ENCODE measurements at regions of chr19 and their contacts with region 1.

Region 1: DNA sequence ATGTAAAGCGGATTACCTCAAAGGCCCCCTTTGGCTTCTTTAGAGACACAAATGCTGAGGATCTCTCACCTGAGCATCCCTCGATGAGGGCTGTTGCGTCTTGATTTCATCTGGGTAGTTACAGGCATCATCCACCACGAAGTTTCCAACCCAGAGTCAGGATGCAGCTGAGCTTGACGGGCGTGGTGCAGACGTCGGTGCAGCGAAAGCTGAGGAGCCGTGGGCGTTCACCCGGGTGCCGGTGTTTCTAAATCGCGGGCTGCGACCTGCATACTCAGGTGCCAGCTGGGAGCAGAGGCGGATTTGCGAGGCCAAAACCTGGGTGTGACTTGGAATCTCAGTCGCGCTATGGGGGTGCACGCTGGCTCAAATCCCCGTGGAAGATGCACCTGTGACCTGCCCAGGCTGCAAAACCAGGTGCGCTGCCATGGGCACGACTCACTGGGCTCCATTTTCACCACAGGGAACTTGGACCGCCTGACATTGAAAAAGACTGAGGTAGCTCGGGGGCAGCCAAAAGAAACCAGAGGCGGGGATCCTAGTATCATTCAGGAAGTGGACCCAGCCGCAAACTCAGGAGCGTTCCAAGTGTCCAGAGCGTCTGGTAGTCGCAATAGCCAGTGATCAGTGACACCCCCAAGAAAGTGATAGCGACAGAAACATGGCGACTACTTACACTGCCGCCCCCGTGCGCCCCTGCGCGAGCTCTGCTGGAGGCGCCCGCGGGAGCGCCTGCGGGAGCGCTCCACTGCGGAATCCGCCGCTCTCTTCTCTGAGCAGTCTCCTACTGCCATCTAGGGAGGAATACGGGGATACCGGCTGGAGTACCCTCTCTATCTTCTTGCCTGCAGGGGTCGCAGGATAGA is 36.4 kb upstream of the IGFL4 start:
- DNase-seq: peak; percentile 69
- H3K4me3 ChIP-seq: peak overlapping the region; percentile 38 to 52 (median 51)
- H3K27ac ChIP-seq: no peak overlapping the region
- H3K4me1 ChIP-seq: peaks cover 27% of the 10 kb centered on the region
- H3K27me3 ChIP-seq: no peaks in the 10 kb centered on the region
- CTCF ChIP-seq: peak; percentile 100

Region 2: DNA sequence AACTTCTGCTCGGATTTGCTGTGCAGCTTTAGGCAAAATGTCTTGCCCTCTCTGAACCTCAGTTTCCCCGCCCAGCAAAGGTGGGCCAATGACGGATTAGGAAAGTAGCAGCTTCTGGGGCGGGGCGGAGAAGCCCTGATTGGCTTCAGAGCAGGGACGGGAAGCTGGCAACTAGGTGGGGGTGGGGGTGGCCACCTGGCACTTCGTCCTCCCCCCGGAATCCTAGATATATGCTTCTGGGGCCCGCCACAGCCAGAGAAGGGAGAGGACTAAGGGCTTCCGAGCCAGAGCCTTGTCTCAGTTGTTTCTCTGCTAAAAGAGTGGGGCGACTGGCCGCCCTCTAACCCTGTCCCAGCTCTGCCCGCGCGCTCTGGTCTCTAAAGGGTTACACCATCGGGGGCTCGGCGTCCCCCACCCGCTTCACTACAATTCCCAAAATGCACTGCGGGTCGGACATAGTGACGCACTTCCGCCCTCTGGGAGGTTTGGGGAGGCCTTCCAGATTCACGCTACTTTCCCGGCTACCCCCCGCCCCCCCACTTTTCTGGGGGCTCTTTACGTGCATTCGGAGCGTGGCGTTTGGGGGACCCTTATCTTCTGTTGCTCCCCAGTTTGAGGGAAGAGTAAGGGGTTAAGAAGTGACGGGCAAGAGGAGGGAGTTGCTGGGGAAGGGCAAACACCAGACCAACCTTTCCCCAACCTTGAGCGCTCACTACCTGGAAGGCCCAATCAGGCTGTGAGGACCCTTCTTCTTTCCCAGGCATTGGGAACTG is 190.6 kb before region 1 on chr19:
- CTCF ChIA-PET with region 1: no interaction called
- dilution Hi-C with region 1: no loop called
- in situ Hi-C with region 1: no loop called
- intact Hi-C with region 1: loop called (anchors 10 kb)
- DNase-seq: peak; percentile 95
- H3K4me3 ChIP-seq: peak overlapping the region; percentile 54 to 74 (median 61)
- H3K27ac ChIP-seq: peak overlapping the region; percentile 73
- H3K4me1 ChIP-seq: peaks cover 32% of the 10 kb centered on the region
- H3K27me3 ChIP-seq: no peaks in the 10 kb centered on the region
- CTCF ChIP-seq: no peak

Region 3: DNA sequence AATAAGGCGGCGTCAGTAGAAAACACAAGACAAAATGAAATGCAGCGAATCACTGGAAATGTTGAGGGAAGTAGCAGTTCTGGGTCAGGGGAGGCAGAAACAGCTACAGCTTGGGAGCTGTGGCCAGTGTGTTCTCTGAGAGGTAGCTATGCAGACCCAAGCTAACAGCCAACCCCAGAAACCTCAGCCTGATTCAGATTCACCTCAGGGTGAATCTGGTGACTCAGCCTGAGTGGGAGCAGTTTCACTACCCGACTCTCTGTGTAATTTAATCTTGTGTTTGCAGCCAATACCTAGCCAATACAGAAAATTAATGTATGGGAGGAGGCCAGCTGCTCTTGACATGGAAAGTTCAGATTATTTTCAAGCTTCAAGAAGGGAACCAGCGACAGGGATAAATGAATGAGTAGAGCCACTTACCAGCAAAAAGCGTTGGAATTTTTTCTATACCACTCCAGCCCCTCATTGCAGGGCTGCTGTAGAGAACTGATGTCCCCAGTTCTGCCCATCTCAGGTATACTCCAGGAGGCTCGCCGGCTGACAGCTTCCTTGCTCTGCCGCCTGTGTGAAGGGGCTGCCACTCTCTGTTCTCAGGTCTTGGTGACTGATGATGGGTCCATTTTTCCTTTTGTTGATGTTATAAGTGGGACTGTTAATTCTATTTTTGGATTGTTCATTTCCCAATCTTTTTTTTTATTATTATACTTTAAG is 38.4 kb after region 1 on chr19:
- CTCF ChIA-PET with region 1: no interaction called
- dilution Hi-C with region 1: no loop called
- in situ Hi-C with region 1: loop called in 1 of 2 experiments (anchors 5 kb)
- intact Hi-C with region 1: loop called (anchors 1 kb)
- DNase-seq: peak; percentile 97
- H3K4me3 ChIP-seq: peak overlapping the region in 2 of 3 experiments; percentile 4 to 15
- H3K27ac ChIP-seq: peak overlapping the region; percentile 97
- H3K4me1 ChIP-seq: peaks cover 45% of the 10 kb centered on the region
- H3K27me3 ChIP-seq: no peaks in the 10 kb centered on the region
- CTCF ChIP-seq: no peak

Region 4: GRCh38 chr19:46192992-46193650 is 115.9 kb after region 1 on chr19:
- CTCF ChIA-PET with region 1: interaction called, 18 read pairs
- dilution Hi-C with region 1: no loop called
- in situ Hi-C with region 1: loop called (anchors 5 kb)
- intact Hi-C with region 1: loop called (anchors 1 kb)
- DNase-seq: peak; percentile 86
- H3K4me3 ChIP-seq: no peak overlapping the region
- H3K27ac ChIP-seq: peak overlapping the region; percentile 51
- H3K4me1 ChIP-seq: peaks cover 43% of the 10 kb centered on the region
- H3K27me3 ChIP-seq: no peaks in the 10 kb centered on the region
- CTCF ChIP-seq: no peak

Region 5: DNA sequence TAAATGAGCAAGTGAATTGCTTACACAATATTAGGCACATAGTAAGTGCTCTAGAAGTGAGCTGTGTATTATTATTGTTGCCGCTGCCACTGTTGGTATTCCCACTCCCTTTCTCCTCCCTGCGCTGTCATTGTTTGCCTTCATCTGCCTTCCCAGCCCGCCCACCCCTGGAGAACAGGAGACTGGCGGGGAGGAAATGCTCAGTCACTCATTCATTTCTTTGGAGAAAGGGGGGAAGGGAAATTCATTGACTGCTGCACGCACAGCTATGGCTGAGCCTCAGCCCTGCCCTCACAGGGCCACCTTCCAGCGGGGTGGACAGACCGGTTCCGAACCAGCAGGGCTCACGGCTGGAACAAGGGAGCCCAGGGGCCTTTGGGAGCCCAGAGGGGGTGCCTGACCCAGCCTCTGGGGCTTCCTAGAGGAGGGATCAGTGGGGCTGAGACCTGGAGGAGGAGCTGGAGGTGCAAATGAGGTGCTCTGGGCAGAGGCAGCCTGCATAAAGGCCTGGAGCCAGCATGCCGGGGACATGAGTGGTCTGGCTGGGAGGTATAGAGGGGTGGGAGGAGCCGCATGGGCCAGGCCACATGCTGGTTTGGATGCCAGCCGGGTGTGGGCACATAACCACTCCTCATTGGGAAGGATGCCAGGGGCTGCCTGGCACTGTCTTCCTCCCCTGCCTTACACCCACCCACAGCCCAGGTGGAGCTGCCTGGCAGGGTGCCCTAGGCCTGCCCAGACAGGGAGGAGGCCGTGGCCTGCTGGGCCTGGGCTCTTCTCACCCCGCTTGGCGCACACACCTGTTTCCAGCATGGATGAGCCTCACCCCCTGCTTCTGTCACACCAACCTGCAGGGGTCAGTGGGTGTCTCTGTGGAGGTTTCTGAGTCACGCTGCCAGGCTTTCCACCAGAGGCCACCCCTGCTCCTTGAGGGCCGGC is 296.5 kb after region 1 on chr19:
- CTCF ChIA-PET with region 1: no interaction called
- dilution Hi-C with region 1: no loop called
- in situ Hi-C with region 1: no loop called
- intact Hi-C with region 1: loop called (anchors 10 kb)
- DNase-seq: peak; percentile 99
- H3K4me3 ChIP-seq: peak overlapping the region in 2 of 3 experiments; percentile 29 to 35
- H3K27ac ChIP-seq: peak overlapping the region; percentile 91
- H3K4me1 ChIP-seq: peaks cover 38% of the 10 kb centered on the region
- H3K27me3 ChIP-seq: no peaks in the 10 kb centered on the region
- CTCF ChIP-seq: peak in 1 of 2 donors; percentile 34

Region 6: GRCh38 chr19:46513461-46514236 is 436.5 kb after region 1 on chr19:
- CTCF ChIA-PET with region 1: no interaction called
- dilution Hi-C with region 1: no loop called
- in situ Hi-C with region 1: loop called in 1 of 2 experiments (anchors 25 kb)
- intact Hi-C with region 1: loop called (anchors 5 kb)
- DNase-seq: peak; percentile 57
- H3K4me3 ChIP-seq: no peak overlapping the region
- H3K27ac ChIP-seq: no peak overlapping the region
- H3K4me1 ChIP-seq: peaks cover 5% of the 10 kb centered on the region
- H3K27me3 ChIP-seq: no peaks in the 10 kb centered on the region
- CTCF ChIP-seq: peak; percentile 68 to 97

Measured in mammary epithelial cell (primary cell).